ENCODE measurements at regions of chr14 and their contacts with region 1.

Region 1: DNA sequence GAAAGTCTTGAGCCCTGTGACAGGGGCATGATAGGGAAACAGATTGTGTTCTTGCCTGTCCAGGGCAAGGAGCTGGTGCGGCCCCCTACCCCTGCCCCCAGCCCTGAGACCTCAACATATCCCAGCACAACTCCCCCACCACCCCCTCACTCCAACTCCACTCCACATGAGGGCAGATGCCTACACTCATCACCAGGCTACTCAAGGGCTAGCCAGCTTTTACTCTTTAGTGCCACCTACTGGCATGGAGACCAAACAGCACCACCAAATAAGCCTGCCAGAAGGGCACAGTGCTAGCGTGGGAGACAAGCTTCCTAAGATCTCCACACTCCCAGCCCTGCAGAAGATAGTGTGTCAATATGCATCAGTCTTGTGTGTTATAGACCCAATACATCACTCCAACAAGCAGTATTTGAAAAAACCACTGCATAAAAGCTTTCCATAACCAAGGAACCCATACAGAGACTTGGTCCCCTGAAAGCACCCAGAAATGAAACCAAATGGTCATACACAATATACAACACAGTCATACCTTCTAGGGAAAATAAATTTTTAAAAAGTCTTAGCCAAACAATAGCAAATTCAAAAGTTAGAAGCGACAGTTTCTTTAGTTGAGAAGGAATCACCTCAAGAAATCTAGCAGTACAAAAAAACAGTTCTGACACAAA is 154.4 kb downstream of the KCNK10 start:
- DNase-seq: peak; percentile 75
- H3K4me3 ChIP-seq: no peak overlapping the region
- H3K27ac ChIP-seq: no peak overlapping the region
- H3K4me1 ChIP-seq: peaks cover 0 to 5% (median 0%) of the 10 kb centered on the region in 6 donors
- H3K27me3 ChIP-seq: no peaks in the 10 kb centered on the region
- CTCF ChIP-seq: peak; percentile 59 to 89 (median 78)
- POLR2A ChIP-seq: no peak

Region 2: GRCh38 chr14:87944987-87945604 is 223.5 kb before region 1 on chr14:
- intact Hi-C with region 1: loop called (anchors 5 kb)
- DNase-seq: no peak
- H3K4me3 ChIP-seq: no peak overlapping the region
- H3K27ac ChIP-seq: no peak overlapping the region
- H3K4me1 ChIP-seq: peaks cover 0 to 4% (median 0%) of the 10 kb centered on the region in 6 donors
- H3K27me3 ChIP-seq: no peaks in the 10 kb centered on the region
- CTCF ChIP-seq: peak; percentile 36 to 84 (median 71)
- POLR2A ChIP-seq: no peak

Region 3: DNA sequence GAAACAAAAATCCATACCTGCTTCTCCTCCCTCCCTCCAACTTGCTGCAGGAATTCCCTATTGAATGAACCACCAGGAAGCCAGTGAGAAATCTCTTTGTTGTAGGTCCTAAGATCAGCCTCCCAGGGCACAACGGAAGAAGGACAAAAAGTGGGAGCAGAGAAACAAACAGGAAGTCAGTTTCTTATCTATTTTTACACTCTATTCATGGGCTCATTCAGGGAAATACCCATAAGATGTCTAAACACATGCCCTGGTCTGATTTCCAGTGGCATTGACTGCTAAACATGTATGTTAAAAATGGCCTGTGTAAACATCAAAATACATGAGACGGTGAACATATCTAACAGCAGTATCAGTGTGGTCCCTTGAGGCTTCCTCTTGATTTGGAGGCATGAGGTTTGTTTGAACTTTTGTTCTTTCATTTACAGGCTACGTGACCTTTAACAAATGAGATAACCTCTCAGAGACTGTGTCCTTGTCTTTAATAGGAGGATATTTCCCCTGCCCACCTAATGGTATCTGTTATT is 144.9 kb before region 1 on chr14:
- intact Hi-C with region 1: loop called (anchors 10 kb)
- DNase-seq: no peak
- H3K4me3 ChIP-seq: no peak overlapping the region
- H3K27ac ChIP-seq: peak overlapping the region in 4 of 8 donors; percentile 1 to 24 (median 6)
- H3K4me1 ChIP-seq: peaks cover 7 to 44% (median 29%) of the 10 kb centered on the region in 6 donors
- H3K27me3 ChIP-seq: no peaks in the 10 kb centered on the region
- CTCF ChIP-seq: no peak
- POLR2A ChIP-seq: no peak

Measured in spleen (tissue), 13 donors.